ENCODE measurements at regions of chr21 and their contacts with region 1.

Region 1: DNA sequence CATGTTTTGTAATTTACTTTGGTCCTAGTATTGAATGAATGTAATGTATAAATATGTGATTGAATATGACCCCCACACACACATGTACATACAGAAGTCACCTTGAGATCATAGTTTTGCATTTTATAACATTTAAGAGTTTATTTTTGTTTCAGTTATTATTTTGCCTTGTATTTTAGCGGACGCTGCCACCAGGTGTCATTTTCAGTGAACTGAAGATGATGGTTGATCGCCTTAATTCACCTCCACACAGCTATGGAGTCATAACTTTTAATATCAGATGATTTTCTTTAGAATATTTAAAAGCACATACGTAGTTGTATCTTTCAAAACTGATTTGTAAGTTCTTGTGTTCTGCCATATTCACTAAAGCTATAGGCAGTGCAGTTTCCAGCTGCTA is 130.4 kb downstream of the DYRK1A start:
- DNase-seq: no peak
- H3K4me3 ChIP-seq: no peak overlapping the region
- H3K27ac ChIP-seq: no peak overlapping the region
- H3K4me1 ChIP-seq: no peaks in the 10 kb centered on the region
- H3K27me3 ChIP-seq: no peaks in the 10 kb centered on the region
- CTCF ChIP-seq: peak; percentile 51
- EP300 ChIP-seq: no peak
- RAD21 ChIP-seq: peak; percentile 37; the same call in 1 of the 2 replicates

Region 2: DNA sequence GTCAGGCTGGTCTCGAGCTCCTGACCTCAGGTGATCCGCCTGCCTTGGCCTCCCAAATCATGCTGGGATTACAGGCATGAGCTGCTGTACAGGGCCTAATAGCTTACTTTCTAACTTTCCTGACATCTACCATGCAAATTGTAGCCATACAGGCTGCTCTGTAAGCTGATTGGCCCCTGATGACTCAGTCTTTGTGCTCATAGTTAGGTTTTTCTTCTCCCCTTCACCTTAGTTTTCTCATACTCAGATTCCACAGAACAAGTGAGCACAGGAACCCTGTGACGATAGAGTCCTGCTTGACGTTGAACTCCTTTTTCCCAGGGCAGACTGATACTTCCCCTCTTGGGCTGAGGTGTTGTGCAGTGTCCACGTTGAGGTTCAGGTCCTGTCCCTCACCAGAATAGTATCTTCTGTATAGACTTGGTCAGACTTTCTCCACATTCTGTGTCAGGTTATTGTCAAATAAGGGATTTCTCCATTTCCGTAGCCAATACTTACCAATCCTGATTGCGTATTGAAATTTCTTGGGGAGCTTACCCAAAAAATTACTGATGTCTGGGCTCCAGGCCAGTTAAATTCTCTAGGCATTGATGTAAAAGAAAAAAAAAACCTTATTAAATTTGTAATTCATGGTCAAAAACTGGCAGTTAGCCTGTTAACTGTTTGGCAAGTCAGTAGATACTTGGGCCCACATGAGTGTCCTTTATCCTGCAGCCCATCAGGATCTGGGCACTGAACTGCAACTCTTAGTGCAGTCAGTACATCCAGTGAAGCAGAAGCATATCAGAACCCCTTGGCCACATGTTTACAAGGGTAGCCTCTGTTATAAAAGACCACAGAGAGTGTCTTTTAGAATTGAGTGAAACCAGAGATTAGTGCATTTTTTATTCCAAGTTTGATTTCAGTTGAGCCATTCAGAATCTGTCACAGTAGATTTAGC is 12.2 kb before region 1 on chr21:
- CTCF ChIA-PET with region 1: interaction called, 11 read pairs
- POLR2A ChIA-PET with region 1: no interaction called
- DNase-seq: no peak
- H3K4me3 ChIP-seq: no peak overlapping the region
- H3K27ac ChIP-seq: peak overlapping the region in 1 of 2 experiments; percentile 51; a peak in 2 of 4 replicates
- H3K4me1 ChIP-seq: peaks cover 0 to 4% of the 10 kb centered on the region in 2 experiments; a peak in 2 of 4 replicates
- H3K27me3 ChIP-seq: no peaks in the 10 kb centered on the region
- CTCF ChIP-seq: no peak
- EP300 ChIP-seq: no peak
- RAD21 ChIP-seq: no peak

Region 3: DNA sequence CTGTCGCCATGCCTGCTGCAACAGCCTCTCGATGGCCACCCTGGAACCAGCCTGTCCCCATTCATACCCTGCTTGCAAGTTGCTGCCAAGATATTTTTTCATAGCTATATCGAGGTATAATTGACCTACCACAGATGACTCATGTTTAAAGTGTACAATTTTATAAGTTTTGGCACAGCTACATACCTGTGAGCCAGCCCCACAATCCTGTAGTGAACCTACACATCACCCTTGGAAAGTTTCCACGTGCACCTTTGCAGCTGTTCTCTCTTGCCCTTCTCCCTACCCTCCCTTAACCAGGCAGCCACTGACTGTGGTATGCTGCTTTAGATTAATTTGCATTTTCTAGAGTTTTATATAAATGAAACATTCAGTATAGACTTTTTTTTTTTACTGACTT is 442.3 kb after region 1 on chr21:
- CTCF ChIA-PET with region 1: no interaction called
- POLR2A ChIA-PET with region 1: no interaction called
- DNase-seq: no peak
- H3K4me3 ChIP-seq: no peak overlapping the region
- H3K27ac ChIP-seq: no peak overlapping the region
- H3K4me1 ChIP-seq: no peaks in the 10 kb centered on the region
- H3K27me3 ChIP-seq: no peaks in the 10 kb centered on the region
- CTCF ChIP-seq: no peak
- EP300 ChIP-seq: no peak
- RAD21 ChIP-seq: no peak